ENCODE measurements at regions of chr17 and their contacts with region 1.

Region 1: GRCh38 chr17:70552230-70552981 is 383.1 kb downstream of the KCNJ2 start:
- DNase-seq: peak in 2 of 9 donors; percentile 2 to 9
- ATAC-seq: peak; percentile 42
- H3K4me3 ChIP-seq: no peak overlapping the region
- H3K4me3 Mint-ChIP-seq: no peak overlapping the region
- H3K27ac ChIP-seq: no peak overlapping the region
- H3K27ac Mint-ChIP-seq: no peak overlapping the region
- H3K4me1 ChIP-seq: no peaks in the 10 kb centered on the region
- H3K4me1 Mint-ChIP-seq: no peaks in the 10 kb centered on the region
- H3K27me3 ChIP-seq: no peaks in the 10 kb centered on the region
- H3K27me3 Mint-ChIP-seq: no peaks in the 10 kb centered on the region

Region 2: GRCh38 chr17:69567130-69567529 is 985.3 kb before region 1 on chr17:
- CTCF ChIA-PET with region 1: interaction called, 4 read pairs
- POLR2A ChIA-PET with region 1: no interaction called
- intact Hi-C with region 1: loop called in 1 of 2 experiments (anchors 10 kb)
- DNase-seq: no peak
- ATAC-seq: no peak
- H3K4me3 ChIP-seq: no peak overlapping the region
- H3K4me3 Mint-ChIP-seq: no peak overlapping the region
- H3K27ac ChIP-seq: no peak overlapping the region
- H3K27ac Mint-ChIP-seq: no peak overlapping the region
- H3K4me1 ChIP-seq: no peaks in the 10 kb centered on the region
- H3K4me1 Mint-ChIP-seq: peaks cover 0 to 6% (median 5%) of the 10 kb centered on the region in 7 donors
- H3K27me3 ChIP-seq: no peaks in the 10 kb centered on the region
- H3K27me3 Mint-ChIP-seq: peaks cover 2 to 17% (median 6%) of the 10 kb centered on the region in 5 donors

Measured in naive thymus-derived CD4-positive, alpha-beta T cell (primary cell).